Esophagus muscularis mucosa (tissue), 4 donors: ENCODE measurements at regions of chr4 and their contacts with region 1.

Region 1: GRCh38 chr4:155403886-155404285 is 27.1 kb upstream of the MAP9 start:
- DNase-seq: peak; percentile 3
- H3K4me3 ChIP-seq: no peak overlapping the region
- H3K27ac ChIP-seq: no peak overlapping the region
- H3K4me1 ChIP-seq: peaks cover 0 to 49% (median 29%) of the 10 kb centered on the region in 4 donors
- H3K27me3 ChIP-seq: no peaks in the 10 kb centered on the region
- CTCF ChIP-seq: peak; percentile 32 to 49 (median 32)
- EP300 ChIP-seq: no peak
- POLR2A ChIP-seq: no peak

Region 2: DNA sequence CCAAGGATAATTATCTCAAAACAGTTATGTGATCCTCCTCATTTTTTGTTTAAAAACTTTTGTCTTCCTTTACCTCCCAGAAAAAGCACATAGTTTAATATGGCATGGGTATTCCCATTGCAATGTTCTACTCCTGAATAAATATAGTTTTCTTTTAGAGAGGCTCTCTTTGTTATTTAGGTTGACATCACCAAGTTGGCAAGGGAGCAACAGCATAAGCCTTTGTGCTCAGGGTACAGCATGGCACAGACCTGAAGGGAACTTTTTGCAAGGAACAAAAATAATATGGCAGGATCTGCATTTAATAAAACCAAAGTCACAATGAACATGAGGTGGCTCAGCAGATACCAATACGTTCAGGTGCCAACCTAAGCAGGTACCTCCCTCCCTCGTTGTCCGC is 242.5 kb before region 1 on chr4:
- intact Hi-C with region 1: no loop called
- DNase-seq: no peak
- H3K4me3 ChIP-seq: no peak overlapping the region
- H3K27ac ChIP-seq: no peak overlapping the region
- H3K4me1 ChIP-seq: no peaks in the 10 kb centered on the region
- H3K27me3 ChIP-seq: no peaks in the 10 kb centered on the region
- CTCF ChIP-seq: no peak
- EP300 ChIP-seq: no peak
- POLR2A ChIP-seq: no peak

Region 3: GRCh38 chr4:155543126-155543765 is 139.4 kb after region 1 on chr4:
- intact Hi-C with region 1: no loop called
- DNase-seq: no peak
- H3K4me3 ChIP-seq: no peak overlapping the region
- H3K27ac ChIP-seq: no peak overlapping the region
- H3K4me1 ChIP-seq: peaks cover 3 to 18% (median 11%) of the 10 kb centered on the region in 4 donors
- H3K27me3 ChIP-seq: no peaks in the 10 kb centered on the region
- CTCF ChIP-seq: no peak
- EP300 ChIP-seq: no peak
- POLR2A ChIP-seq: no peak

Region 4: GRCh38 chr4:155953151-155954114 is 549.5 kb after region 1 on chr4 and contains the start of gene CTSO:
- intact Hi-C with region 1: loop called (anchors 10 kb)
- DNase-seq: peak; percentile 93
- H3K4me3 ChIP-seq: peak within 1 kb of the TSS; percentile 67 to 81 (median 78)
- H3K27ac ChIP-seq: peak within 1 kb of the TSS; percentile 94 to 98 (median 96)
- H3K4me1 ChIP-seq: peaks cover 4 to 20% (median 14%) of the 10 kb centered on the region in 4 donors
- H3K27me3 ChIP-seq: no peaks in the 10 kb centered on the region
- CTCF ChIP-seq: peak; percentile 61 to 65 (median 62)
- EP300 ChIP-seq: no peak
- POLR2A ChIP-seq: peak; percentile 10
- total RNA-seq, gene CTSO: 18.8 to 22.8 (median 21.3) TPM